ENCODE measurements at regions of chr19 and their contacts with region 1.

Region 1: DNA sequence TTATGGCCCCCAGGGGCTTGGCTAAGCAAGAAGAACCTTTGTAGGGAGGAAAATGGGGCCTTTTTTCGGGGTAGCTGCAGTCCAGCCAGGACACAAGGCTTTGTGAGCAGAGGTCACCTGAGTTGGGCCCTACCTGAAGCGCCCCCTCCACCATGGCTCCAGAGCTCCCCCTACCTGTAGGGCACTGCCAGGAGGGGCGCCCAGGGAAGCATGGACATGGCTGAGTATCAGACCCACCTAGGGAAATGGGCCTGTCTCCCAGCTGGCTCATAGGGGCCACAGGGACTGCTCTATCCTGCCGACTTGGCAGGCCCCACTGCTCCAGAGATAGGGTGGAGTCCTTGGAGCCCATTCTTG is 9.0 kb upstream of the CEBPA start:
- DNase-seq: peak in 1 of 2 experiments; percentile 43
- H3K4me3 ChIP-seq: no peak overlapping the region
- H3K27ac ChIP-seq: no peak overlapping the region
- H3K4me1 ChIP-seq: no peaks in the 10 kb centered on the region
- H3K27me3 ChIP-seq: no peaks in the 10 kb centered on the region
- CTCF ChIP-seq: peak; percentile 61

Region 2: GRCh38 chr19:33241530-33242101 is 69.7 kb before region 1 on chr19:
- CTCF ChIA-PET with region 1: no interaction called
- POLR2A ChIA-PET with region 1: no interaction called
- intact Hi-C with region 1: loop called (anchors 2 kb)
- DNase-seq: no peak
- H3K4me3 ChIP-seq: no peak overlapping the region
- H3K27ac ChIP-seq: no peak overlapping the region
- H3K4me1 ChIP-seq: no peaks in the 10 kb centered on the region
- H3K27me3 ChIP-seq: no peaks in the 10 kb centered on the region
- CTCF ChIP-seq: peak; percentile 72

Region 3: GRCh38 chr19:33339016-33339984 is 28.0 kb after region 1 on chr19:
- CTCF ChIA-PET with region 1: no interaction called
- POLR2A ChIA-PET with region 1: no interaction called
- intact Hi-C with region 1: loop called (anchors 1 kb)
- DNase-seq: peak in 1 of 2 experiments; percentile 76
- H3K4me3 ChIP-seq: no peak overlapping the region
- H3K27ac ChIP-seq: peak overlapping the region; percentile 36; the same call in 1 of the 2 replicates
- H3K4me1 ChIP-seq: peaks cover 8% of the 10 kb centered on the region
- H3K27me3 ChIP-seq: peaks cover 18% of the 10 kb centered on the region; the same call in 1 of the 2 replicates
- CTCF ChIP-seq: no peak

Region 4: GRCh38 chr19:33486936-33487811 is 175.9 kb after region 1 on chr19:
- CTCF ChIA-PET with region 1: no interaction called
- POLR2A ChIA-PET with region 1: no interaction called
- intact Hi-C with region 1: no loop called
- DNase-seq: no peak
- H3K4me3 ChIP-seq: no peak overlapping the region
- H3K27ac ChIP-seq: no peak overlapping the region
- H3K4me1 ChIP-seq: no peaks in the 10 kb centered on the region
- H3K27me3 ChIP-seq: no peaks in the 10 kb centered on the region
- CTCF ChIP-seq: no peak